Left cardiac atrium (tissue), 4 donors: ENCODE measurements at regions of chr17 and their contacts with region 1.

Region 1: DNA sequence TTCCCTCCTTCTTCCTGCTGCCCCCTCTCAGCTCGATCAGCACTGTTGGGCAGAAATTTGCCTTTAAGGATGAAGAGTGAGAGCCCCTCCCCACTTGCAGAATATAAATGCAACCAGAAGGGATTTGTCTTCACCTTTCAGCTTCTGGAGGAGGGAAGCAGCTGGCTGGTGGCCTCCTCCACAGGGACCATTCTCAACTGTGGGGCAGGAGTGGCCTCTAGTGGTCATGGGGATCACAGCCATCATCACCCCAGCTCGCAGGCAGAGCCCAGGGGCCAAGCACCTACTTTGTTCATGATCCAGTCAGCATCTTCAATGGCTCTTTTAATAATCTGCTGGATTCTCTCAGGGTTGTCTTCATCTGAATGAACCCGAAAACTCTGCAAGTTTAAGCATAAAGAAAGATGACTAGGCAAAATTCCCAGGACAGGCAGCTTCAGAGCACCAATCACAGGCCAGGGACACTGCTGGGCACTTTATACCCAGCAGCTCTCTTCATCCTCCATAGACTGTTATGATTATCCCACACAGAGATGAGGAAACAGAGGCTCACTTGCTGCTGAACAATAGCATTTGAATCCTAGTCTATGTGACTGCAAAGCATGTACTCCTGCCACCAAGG is 13.1 kb downstream of the LYRM9 start:
- DNase-seq: peak; percentile 69
- ATAC-seq: peak; percentile 95

Region 2: GRCh38 chr17:27666831-27667560 is 213.1 kb before region 1 on chr17:
- intact Hi-C with region 1: no loop called
- DNase-seq: no peak
- ATAC-seq: no peak

Region 3: GRCh38 chr17:27760069-27760885 is 119.8 kb before region 1 on chr17:
- intact Hi-C with region 1: loop called (anchors 2 to 5 kb)
- DNase-seq: peak; percentile 69
- ATAC-seq: peak; percentile 50 to 53

Region 4: GRCh38 chr17:27805520-27806146 is 74.5 kb before region 1 on chr17:
- intact Hi-C with region 1: loop called (anchors 1 to 5 kb)
- DNase-seq: peak; percentile 83
- ATAC-seq: peak; percentile 92 to 95

Region 5: DNA sequence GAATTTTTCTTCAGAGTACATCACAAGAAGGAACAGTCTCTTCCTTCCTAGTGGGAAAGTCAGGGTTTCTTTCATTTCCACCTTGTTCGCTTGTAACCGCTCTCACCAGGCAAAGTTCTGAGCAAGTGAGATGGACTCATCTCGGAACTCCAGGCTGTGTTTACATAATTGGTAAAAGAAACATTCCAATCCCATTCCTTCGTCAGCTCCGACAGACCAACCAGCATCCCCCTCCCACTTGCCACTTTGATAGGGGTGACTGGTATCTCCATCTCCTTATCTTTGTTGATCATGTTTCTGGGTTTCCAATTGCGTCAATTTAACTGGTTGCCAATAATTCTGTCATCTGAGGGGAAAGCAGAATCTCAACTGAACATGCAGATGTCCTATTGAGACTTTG is 49.9 kb after region 1 on chr17:
- intact Hi-C with region 1: loop called in 1 of 2 experiments (anchors 5 kb)
- DNase-seq: no peak
- ATAC-seq: no peak